HepG2 (cell line): ENCODE measurements at regions of chr4 and their contacts with region 1.

Region 1: GRCh38 chr4:143335979-143336780 is 496 bp upstream of the GAB1 start:
- DNase-seq: peak; percentile 71
- ATAC-seq: peak; percentile 84
- H3K4me3 ChIP-seq: peak overlapping the region; percentile 86 to 99 (median 89)
- H3K27ac ChIP-seq: peak overlapping the region; percentile 88
- H3K4me1 ChIP-seq: peaks cover 24% of the 10 kb centered on the region
- H3K27me3 ChIP-seq: no peaks in the 10 kb centered on the region
- CTCF ChIP-seq: no peak
- EP300 ChIP-seq: no peak
- POLR2A ChIP-seq: peak; percentile 37 to 65; a peak in 2 of 4 replicates
- RAD21 ChIP-seq: no peak

Region 2: DNA sequence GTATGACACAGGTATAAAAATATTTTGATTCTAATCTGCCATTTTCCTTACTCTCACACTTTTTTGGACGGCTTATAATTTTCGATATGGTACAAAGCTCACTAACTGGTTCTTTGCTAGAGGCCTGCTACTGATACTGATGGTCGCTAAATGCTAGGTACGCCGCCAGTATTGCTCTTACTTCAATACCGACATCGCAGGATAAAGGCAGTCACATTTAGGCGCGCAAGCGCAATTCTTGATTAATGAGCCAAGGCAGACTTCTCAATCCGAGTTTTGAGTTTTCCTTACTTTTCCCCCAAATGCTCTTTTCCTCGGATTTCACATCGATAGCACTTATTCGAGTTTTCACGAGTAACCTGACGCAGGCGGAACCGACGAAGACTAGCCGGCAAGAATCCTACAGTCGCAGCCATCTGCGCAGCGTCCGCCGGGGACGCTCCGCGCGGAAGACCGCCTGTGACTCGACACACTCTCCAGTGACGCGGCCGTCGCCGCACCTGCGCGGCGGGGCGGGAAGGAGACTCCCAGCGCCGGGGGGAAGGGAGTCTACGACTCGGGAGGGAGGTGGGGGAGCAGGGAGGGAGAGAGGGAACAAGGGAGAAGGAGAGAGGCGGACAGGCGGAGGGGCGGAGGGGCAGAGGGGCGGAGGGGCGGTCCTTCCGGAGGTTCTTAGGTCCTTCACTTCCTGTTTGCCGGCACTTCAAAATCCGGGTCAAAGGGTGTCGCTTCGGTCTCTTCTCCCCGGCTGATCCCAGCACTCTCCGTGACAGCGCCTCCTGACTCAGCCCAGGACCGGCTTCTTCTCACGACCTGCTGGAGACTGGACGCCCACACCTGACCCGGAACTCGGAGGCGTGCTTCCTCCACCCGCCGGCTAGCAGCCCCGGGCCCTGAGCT is 151.7 kb before region 1 on chr4 and contains the start of gene USP38:
- CTCF ChIA-PET with region 1: no interaction called
- POLR2A ChIA-PET with region 1: interaction called, 10 read pairs
- in situ Hi-C with region 1: no loop called
- intact Hi-C with region 1: loop called (anchors 2 kb)
- DNase-seq: peak; percentile 91
- ATAC-seq: peak; percentile 94
- H3K4me3 ChIP-seq: peak within 1 kb of the TSS; percentile 83 to 100 (median 96)
- H3K27ac ChIP-seq: peak within 1 kb of the TSS; percentile 88
- H3K4me1 ChIP-seq: peaks cover 31% of the 10 kb centered on the region
- H3K27me3 ChIP-seq: no peaks in the 10 kb centered on the region; a peak in 1 of 5 replicates
- CTCF ChIP-seq: no peak; the same call in 1 of the 2 replicates
- EP300 ChIP-seq: no peak; a peak in 1 of 4 replicates
- POLR2A ChIP-seq: peak; percentile 82 to 93
- RAD21 ChIP-seq: no peak
- total RNA-seq, gene USP38: 11.8 and 15.5 TPM in 2 replicates

Region 3: GRCh38 chr4:143224255-143224654 is 111.9 kb before region 1 on chr4:
- CTCF ChIA-PET with region 1: no interaction called
- POLR2A ChIA-PET with region 1: interaction called, 14 read pairs
- in situ Hi-C with region 1: no loop called
- intact Hi-C with region 1: loop called (anchors 1 kb)
- DNase-seq: no peak
- ATAC-seq: no peak
- H3K4me3 ChIP-seq: peak overlapping the region in 2 of 3 experiments; percentile 19 to 23; a peak in 1 of 6 replicates
- H3K27ac ChIP-seq: peak overlapping the region; percentile 68
- H3K4me1 ChIP-seq: peaks cover 31% of the 10 kb centered on the region
- H3K27me3 ChIP-seq: no peaks in the 10 kb centered on the region
- CTCF ChIP-seq: no peak
- EP300 ChIP-seq: no peak
- POLR2A ChIP-seq: no peak
- RAD21 ChIP-seq: no peak

Region 4: DNA sequence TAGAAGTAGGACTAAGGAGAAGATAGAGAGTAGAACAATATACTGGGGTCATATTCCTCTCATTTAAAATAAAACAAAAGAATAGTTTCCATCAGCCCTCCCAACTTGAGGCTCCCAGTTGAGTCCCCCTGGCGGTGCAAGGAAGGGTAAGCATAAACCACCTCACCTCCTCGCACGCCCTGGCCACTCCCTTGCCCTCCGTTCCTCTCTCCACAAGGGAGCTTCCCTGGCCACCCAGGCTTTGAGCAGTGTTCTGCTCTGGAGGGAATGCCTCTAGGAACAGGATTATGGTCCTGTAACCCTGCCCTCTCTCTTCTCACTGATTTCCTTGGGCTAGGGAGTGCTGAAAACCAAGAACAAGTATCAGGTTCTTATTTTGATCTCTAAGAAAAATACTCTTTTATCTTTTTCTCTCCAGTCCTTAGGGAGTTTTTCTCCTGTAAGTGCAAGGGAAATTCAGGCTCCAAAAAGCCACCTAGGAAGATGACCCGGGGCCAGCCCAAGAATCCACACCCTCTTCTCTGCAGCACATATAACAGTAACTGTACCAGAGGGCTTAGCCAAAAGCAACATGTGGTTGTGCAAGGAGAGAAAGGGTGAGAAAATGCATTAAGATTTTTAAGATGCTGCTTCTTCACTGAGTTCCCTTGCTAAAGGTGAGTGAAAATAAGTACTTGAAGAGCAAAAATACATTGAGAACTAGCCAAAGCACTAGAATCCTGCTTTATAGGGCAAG is 81.5 kb before region 1 on chr4:
- CTCF ChIA-PET with region 1: no interaction called
- POLR2A ChIA-PET with region 1: no interaction called
- in situ Hi-C with region 1: no loop called
- intact Hi-C with region 1: no loop called
- DNase-seq: no peak
- ATAC-seq: peak; percentile 90
- H3K4me3 ChIP-seq: no peak overlapping the region
- H3K27ac ChIP-seq: no peak overlapping the region
- H3K4me1 ChIP-seq: no peaks in the 10 kb centered on the region
- H3K27me3 ChIP-seq: peaks cover 0 to 3% of the 10 kb centered on the region in 2 experiments; a peak in 1 of 5 replicates
- CTCF ChIP-seq: no peak
- EP300 ChIP-seq: no peak
- POLR2A ChIP-seq: no peak
- RAD21 ChIP-seq: no peak

Region 5: DNA sequence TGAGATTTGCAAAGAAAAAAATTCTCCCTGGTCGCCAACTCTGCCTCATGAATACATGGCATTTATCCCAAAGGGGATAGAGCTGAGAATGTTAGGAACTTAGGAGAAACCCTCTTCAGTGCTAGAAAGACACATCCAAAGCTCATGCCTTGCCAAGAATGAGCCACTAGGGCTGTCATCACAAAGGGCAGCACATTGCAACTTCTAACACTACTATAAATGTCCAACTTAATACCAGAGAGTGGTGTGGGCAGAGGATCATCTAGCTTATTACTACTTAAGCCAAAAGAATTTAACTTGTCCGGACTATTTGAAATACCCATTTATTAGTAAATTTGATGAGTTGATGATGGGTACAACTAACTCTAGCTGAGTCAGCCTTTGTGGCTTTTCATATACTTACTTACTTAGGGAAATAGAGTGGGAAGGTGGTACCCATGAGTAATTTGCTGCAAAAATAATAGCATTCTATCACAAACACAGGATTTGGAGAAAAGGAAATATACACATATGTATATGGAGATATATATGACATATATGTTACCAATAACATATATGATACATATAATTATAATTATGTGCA is 65.8 kb before region 1 on chr4:
- CTCF ChIA-PET with region 1: no interaction called
- POLR2A ChIA-PET with region 1: no interaction called
- in situ Hi-C with region 1: no loop called
- intact Hi-C with region 1: no loop called
- DNase-seq: no peak
- ATAC-seq: peak; percentile 25; the same call in 1 of the 3 replicates
- H3K4me3 ChIP-seq: no peak overlapping the region
- H3K27ac ChIP-seq: no peak overlapping the region
- H3K4me1 ChIP-seq: no peaks in the 10 kb centered on the region
- H3K27me3 ChIP-seq: no peaks in the 10 kb centered on the region
- CTCF ChIP-seq: no peak
- EP300 ChIP-seq: no peak
- POLR2A ChIP-seq: no peak
- RAD21 ChIP-seq: no peak

Region 6: GRCh38 chr4:143375313-143376073 is 39.3 kb after region 1 on chr4:
- CTCF ChIA-PET with region 1: no interaction called
- POLR2A ChIA-PET with region 1: interaction called, 3 read pairs
- in situ Hi-C with region 1: no loop called
- intact Hi-C with region 1: loop called (anchors 5 kb)
- DNase-seq: peak; percentile 17
- ATAC-seq: peak; percentile 77
- H3K4me3 ChIP-seq: no peak overlapping the region
- H3K27ac ChIP-seq: no peak overlapping the region
- H3K4me1 ChIP-seq: peaks cover 45% of the 10 kb centered on the region
- H3K27me3 ChIP-seq: no peaks in the 10 kb centered on the region
- CTCF ChIP-seq: peak; percentile 59
- EP300 ChIP-seq: no peak
- POLR2A ChIP-seq: no peak
- RAD21 ChIP-seq: 0 out of 2 replicates have a peak, but pooled peaks have one; percentile 24

Region 7: DNA sequence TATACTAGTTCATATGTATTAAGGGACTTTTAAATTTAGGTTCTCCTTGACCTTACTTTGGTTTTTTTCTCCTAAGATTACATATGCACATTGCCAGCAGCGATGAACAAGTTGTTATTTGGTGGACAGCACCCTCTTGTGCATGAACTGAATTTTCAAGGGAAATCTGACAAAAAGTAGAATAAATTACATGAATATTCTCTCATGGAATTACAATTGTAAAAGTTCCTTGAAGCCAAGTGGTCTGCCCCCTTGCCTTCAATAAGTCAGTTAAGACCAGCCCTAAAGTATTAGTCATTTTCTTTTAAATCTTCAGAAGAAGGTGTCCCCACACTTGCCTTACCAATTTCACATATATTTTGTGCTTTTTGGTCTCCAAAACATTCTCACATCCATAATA is 146.7 kb after region 1 on chr4:
- CTCF ChIA-PET with region 1: no interaction called
- POLR2A ChIA-PET with region 1: no interaction called
- in situ Hi-C with region 1: no loop called
- intact Hi-C with region 1: loop called (anchors 5 kb)
- DNase-seq: peak; percentile 16
- ATAC-seq: no peak
- H3K4me3 ChIP-seq: no peak overlapping the region
- H3K27ac ChIP-seq: no peak overlapping the region
- H3K4me1 ChIP-seq: no peaks in the 10 kb centered on the region
- H3K27me3 ChIP-seq: no peaks in the 10 kb centered on the region
- CTCF ChIP-seq: peak; percentile 63
- EP300 ChIP-seq: no peak
- POLR2A ChIP-seq: no peak
- RAD21 ChIP-seq: peak; percentile 42; the same call in 1 of the 2 replicates

Region 8: GRCh38 chr4:143502231-143502630 is 166.1 kb after region 1 on chr4:
- CTCF ChIA-PET with region 1: no interaction called
- POLR2A ChIA-PET with region 1: no interaction called
- in situ Hi-C with region 1: no loop called
- intact Hi-C with region 1: no loop called
- DNase-seq: no peak
- ATAC-seq: no peak
- H3K4me3 ChIP-seq: no peak overlapping the region
- H3K27ac ChIP-seq: no peak overlapping the region
- H3K4me1 ChIP-seq: no peaks in the 10 kb centered on the region
- H3K27me3 ChIP-seq: no peaks in the 10 kb centered on the region
- CTCF ChIP-seq: no peak
- EP300 ChIP-seq: no peak
- POLR2A ChIP-seq: no peak
- RAD21 ChIP-seq: no peak